Cardiac septum (tissue), 1 donor: ENCODE measurements at regions of chr2 and their contacts with region 1.

Region 1: GRCh38 chr2:238320246-238320647 is at the start of gene TRAF3IP1:
- DNase-seq: peak; percentile 94
- total RNA-seq, gene TRAF3IP1: 16.3 TPM

Region 2: DNA sequence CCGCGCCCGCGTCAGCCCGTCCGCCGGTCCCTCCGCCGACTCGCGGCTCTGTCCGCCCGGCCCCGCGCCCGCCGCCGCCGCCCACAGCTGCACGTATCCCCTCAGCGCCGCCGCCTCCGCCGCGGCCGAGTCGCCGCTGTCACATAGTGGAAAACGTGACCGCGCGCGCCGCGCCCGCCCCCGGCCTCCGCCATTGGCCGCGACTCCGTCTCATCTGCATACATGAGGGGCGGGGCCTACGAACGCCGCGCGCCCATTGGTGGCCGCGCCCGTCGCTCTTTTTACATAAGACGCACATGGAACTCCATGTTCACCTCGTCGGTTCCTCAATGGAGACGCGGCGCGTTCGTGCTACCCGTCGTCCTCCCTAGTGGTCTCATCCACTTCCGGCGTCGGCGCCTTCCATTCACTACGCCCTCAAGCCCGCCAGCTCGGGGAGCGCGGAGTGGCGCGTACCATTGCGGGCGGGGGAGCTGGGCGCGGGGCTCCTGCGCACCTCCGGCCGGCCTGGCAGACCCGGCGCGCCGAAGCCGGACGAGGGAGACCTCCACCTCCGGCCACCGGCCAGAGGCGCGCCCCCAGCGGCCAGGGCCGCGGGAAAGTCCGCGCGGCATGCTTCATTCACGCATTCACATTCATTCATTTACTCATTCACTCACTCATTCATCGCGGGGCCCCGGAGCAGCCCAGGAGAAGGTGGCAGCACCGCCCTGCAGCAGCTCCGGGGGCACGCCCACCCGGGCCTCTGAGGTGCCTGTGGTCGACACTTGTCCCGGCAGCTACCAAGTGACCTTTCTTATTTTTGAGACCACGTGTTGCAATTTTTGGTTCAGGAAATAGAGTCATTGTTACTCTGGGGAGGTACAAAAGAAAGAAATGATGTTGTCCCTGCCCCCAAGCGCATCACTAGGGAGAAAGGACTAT is 31.3 kb before region 1 on chr2:
- intact Hi-C with region 1: loop called (anchors 2 kb)
- DNase-seq: peak; percentile 99